Activated CD8-positive, alpha-beta T cell treated with anti-CD3 and anti-CD28 coated beads for 36 hours (primary cell): ENCODE measurements at regions of chr7 and their contacts with region 1.

Region 1: GRCh38 chr7:44565097-44565794 is 8.5 kb downstream of the DDX56 start:
- DNase-seq: peak; percentile 70
- ATAC-seq: peak; percentile 96
- H3K4me3 Mint-ChIP-seq: no peak overlapping the region
- H3K27ac Mint-ChIP-seq: peak overlapping the region; percentile 17
- H3K4me1 Mint-ChIP-seq: peaks cover 14% of the 10 kb centered on the region
- H3K27me3 Mint-ChIP-seq: no peaks in the 10 kb centered on the region
- CTCF ChIP-seq: peak; percentile 98

Region 2: GRCh38 chr7:44240983-44241510 is 324.2 kb before region 1 on chr7:
- CTCF ChIA-PET with region 1: interaction called, 28 read pairs
- POLR2A ChIA-PET with region 1: no interaction called
- intact Hi-C with region 1: no loop called
- DNase-seq: peak; percentile 77
- ATAC-seq: peak; percentile 92
- H3K4me3 Mint-ChIP-seq: no peak overlapping the region
- H3K27ac Mint-ChIP-seq: no peak overlapping the region
- H3K4me1 Mint-ChIP-seq: no peaks in the 10 kb centered on the region
- H3K27me3 Mint-ChIP-seq: no peaks in the 10 kb centered on the region
- CTCF ChIP-seq: peak; percentile 74

Region 3: DNA sequence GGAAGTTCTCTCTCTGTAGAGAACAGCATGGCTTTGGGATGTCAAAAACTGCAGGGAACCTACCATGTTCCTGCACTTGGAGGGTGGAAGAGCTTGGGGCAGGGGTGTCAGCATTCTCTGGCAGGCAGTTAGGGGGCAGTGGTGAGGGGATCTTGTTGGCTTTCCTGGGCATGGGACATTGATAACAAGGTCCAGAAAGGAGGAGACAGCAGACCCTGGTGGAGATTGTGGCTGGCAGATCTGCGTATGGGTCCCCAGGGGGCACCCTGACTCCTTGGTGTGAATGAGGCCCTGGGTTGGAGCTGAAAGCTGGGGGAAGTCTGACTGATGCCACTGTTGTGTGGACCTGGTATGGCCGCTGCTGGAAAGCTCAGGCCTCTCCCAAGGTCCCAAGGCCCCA is 216.9 kb before region 1 on chr7:
- CTCF ChIA-PET with region 1: interaction called, 14 read pairs
- POLR2A ChIA-PET with region 1: no interaction called
- intact Hi-C with region 1: no loop called
- DNase-seq: peak; percentile 45
- ATAC-seq: peak; percentile 53
- H3K4me3 Mint-ChIP-seq: no peak overlapping the region
- H3K27ac Mint-ChIP-seq: no peak overlapping the region
- H3K4me1 Mint-ChIP-seq: no peaks in the 10 kb centered on the region
- H3K27me3 Mint-ChIP-seq: peaks cover 12% of the 10 kb centered on the region
- CTCF ChIP-seq: peak; percentile 38

Region 4: DNA sequence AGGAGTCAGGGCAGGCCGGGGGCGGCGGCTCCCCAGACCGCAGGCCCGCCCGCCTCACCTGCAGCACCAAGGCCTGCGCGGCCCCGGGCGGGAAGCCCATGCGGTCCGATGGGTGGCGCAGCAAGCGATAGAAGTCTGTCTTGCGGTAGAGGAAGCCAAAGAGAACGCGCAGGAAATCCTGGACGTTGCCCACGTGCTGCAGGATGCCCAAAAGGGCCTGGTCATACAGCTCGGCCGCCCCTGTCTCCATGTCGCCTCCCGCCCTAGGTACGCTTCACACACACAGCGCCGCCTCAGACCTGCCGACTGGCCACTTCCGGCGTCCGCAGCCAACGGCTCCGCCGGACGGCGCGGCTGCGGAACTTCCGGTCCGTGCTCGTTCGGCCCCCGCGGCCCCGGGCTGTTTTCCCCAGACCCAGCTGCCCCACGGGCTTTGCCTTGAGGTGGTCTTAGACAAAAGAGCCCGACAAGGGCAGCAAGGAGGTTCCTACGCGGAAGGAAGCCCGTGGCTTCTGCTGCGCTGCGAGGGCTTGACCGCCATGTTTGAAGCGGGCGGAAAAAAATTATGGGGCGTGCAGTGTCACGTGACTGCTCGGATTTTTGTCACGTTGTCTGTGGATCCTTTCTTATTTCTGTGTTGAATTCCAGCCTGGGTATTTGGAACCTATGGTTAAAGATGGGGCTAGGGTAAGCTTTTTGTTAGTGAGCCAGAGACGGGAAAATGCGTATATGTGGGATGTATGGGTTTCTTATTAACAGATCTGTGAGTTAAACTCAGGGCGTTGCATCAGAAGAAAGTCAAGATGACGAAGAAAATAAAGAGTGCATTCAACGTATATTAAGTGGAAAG is 74.7 kb before region 1 on chr7 and contains the start of gene NUDCD3:
- CTCF ChIA-PET with region 1: interaction called, 25 read pairs
- POLR2A ChIA-PET with region 1: interaction called, 13 read pairs
- intact Hi-C with region 1: no loop called
- DNase-seq: peak; percentile 86
- ATAC-seq: peak; percentile 78
- H3K4me3 Mint-ChIP-seq: peak within 1 kb of the TSS; percentile 92
- H3K27ac Mint-ChIP-seq: peak within 1 kb of the TSS; percentile 97
- H3K4me1 Mint-ChIP-seq: peaks cover 40% of the 10 kb centered on the region
- H3K27me3 Mint-ChIP-seq: peaks cover 2% of the 10 kb centered on the region
- CTCF ChIP-seq: no peak
- total RNA-seq, gene NUDCD3: 102 to 107 TPM

Region 5: DNA sequence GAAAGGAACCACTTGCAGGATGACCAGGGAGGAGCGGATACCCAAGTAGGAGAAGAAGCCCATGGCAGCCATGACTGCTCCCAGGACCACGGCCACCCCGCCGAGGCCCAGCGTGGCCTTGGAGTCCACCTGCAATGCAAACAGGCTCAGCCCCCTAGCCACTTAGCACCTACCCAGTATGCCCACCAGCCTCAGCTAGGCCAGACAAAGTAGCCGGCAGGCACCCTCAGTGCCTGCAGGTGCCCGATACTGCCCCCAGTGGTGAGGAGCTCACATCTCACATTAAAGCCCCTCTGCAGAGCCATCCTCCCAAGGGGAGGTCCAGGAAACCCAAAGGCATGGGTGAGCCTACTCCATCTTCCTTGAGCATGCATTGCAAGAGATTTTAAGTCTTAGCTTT is 30.7 kb before region 1 on chr7:
- CTCF ChIA-PET with region 1: interaction called, 15 read pairs
- POLR2A ChIA-PET with region 1: no interaction called
- intact Hi-C with region 1: no loop called
- DNase-seq: peak; percentile 70
- ATAC-seq: peak; percentile 98
- H3K4me3 Mint-ChIP-seq: no peak overlapping the region
- H3K27ac Mint-ChIP-seq: no peak overlapping the region
- H3K4me1 Mint-ChIP-seq: no peaks in the 10 kb centered on the region
- H3K27me3 Mint-ChIP-seq: no peaks in the 10 kb centered on the region
- CTCF ChIP-seq: peak; percentile 73

Region 6: DNA sequence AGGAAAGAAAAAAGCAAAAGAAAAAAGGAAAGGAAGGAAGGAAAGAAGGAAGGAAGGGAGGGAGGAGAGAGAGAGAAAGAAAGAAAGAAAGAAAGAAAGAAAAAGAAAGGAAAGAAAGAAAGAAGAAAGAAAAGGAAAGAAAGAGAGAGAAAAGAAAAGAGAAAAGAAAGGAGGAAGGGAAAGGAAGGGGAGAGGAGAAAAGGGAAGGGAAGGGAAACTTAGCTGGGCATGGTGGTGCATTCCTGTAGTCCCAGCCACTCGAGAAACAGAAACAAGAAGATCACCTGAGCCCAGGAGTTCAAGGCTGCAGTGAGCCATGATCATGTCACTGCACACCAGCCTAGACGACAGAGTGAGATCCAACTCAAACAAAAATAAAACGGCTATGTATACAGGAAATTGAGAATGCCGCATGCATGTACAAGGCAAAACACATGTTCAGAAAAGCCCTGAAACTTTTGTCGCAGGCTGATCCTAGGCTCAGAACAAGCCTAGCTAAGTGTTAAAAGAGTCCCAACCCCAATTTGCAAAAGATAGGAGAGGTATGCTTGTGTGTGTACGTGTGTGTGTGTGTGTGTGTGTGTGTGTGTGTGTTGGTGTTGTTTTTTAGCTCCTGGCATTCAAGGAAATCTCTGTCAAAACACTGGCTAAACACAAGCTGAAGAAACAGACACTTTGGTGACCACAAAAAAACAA is 17.6 kb before region 1 on chr7:
- CTCF ChIA-PET with region 1: interaction called, 15 read pairs
- POLR2A ChIA-PET with region 1: interaction called, 5 read pairs
- intact Hi-C with region 1: no loop called
- DNase-seq: no peak
- ATAC-seq: no peak
- H3K4me3 Mint-ChIP-seq: no peak overlapping the region
- H3K27ac Mint-ChIP-seq: no peak overlapping the region
- H3K4me1 Mint-ChIP-seq: peaks cover 9% of the 10 kb centered on the region
- H3K27me3 Mint-ChIP-seq: no peaks in the 10 kb centered on the region
- CTCF ChIP-seq: peak; percentile 23

Region 7: GRCh38 chr7:44603208-44603607 is 38.0 kb after region 1 on chr7:
- CTCF ChIA-PET with region 1: no interaction called
- POLR2A ChIA-PET with region 1: no interaction called
- intact Hi-C with region 1: no loop called
- DNase-seq: no peak
- ATAC-seq: no peak
- H3K4me3 Mint-ChIP-seq: no peak overlapping the region
- H3K27ac Mint-ChIP-seq: no peak overlapping the region
- H3K4me1 Mint-ChIP-seq: peaks cover 12% of the 10 kb centered on the region
- H3K27me3 Mint-ChIP-seq: no peaks in the 10 kb centered on the region
- CTCF ChIP-seq: no peak